ENCODE measurements at regions of chr7 and their contacts with region 1.

Region 1: DNA sequence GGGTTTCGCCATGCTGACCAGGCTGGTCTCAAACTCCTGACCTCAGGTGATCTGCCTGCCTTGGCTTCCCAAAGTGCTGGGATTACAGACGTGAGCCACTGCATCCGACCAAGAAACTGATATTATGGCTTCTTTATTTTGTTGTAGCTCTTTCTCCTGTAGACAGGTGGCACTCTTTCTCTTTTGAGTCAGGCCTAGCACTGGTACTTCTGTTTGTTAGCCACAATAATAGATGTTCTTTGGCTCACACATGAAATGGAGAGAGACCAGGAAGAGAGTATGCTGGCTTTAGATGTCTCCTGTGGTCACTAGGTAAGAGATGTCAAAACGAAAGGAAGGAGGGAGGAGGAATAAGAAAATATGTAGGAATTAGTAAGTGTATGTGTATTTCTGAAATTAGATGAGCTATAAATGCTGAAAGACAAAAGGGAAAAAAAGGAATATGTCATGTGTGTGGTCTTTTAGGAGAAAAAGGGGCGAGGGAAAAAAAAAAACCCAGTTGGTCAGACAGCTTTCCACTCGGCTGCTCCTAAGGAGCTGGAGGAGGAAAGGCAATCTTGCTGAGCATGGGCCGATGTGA is 78.7 kb downstream of the CLEC2L start:
- H3K4me3 Mint-ChIP-seq: no peak overlapping the region
- H3K27ac Mint-ChIP-seq: no peak overlapping the region
- H3K4me1 Mint-ChIP-seq: no peaks in the 10 kb centered on the region
- H3K27me3 Mint-ChIP-seq: no peaks in the 10 kb centered on the region

Region 2: GRCh38 chr7:140003913-140004382 is 401.7 kb after region 1 on chr7:
- intact Hi-C with region 1: loop called (anchors 5 kb)
- H3K4me3 Mint-ChIP-seq: no peak overlapping the region
- H3K27ac Mint-ChIP-seq: no peak overlapping the region
- H3K4me1 Mint-ChIP-seq: peaks cover 20% of the 10 kb centered on the region
- H3K27me3 Mint-ChIP-seq: no peaks in the 10 kb centered on the region

Region 3: GRCh38 chr7:140342727-140343514 is 740.7 kb after region 1 on chr7:
- intact Hi-C with region 1: loop called (anchors 2 kb)
- H3K4me3 Mint-ChIP-seq: no peak overlapping the region
- H3K27ac Mint-ChIP-seq: peak overlapping the region; percentile 69
- H3K4me1 Mint-ChIP-seq: peaks cover 18% of the 10 kb centered on the region
- H3K27me3 Mint-ChIP-seq: no peaks in the 10 kb centered on the region